SK-N-SH (cell line): ENCODE measurements at regions of chr4 and their contacts with region 1.

Region 1: DNA sequence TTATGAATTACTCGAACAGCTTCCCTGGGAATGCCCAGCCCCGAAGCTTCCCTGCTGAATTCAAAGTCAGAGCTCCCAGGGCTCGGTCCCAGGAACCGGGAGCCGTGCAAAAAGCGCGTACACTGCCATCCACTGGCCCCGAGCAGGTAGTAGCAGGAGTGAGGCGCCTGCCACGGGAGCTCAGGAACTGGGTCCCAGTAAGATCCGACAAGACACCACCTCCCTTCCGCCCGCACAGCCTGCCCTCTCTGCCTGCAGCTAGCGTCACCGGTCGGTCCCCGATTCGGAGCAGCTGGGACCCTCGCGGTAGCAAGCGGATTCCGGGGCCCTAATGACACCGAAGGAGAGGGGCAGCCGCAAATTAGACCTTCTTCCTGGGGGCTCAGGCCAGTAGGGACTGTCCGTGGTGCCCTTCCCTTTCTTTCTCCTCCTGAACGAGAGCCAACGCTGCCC is 1.2 kb downstream of the CORIN start:
- DNase-seq: peak; percentile 88
- H3K4me3 ChIP-seq: peak overlapping the region; percentile 60 to 67
- H3K27ac ChIP-seq: peak overlapping the region in 1 of 2 experiments; percentile 43; a peak in 1 of 4 replicates
- H3K4me1 ChIP-seq: peaks cover 0 to 9% of the 10 kb centered on the region in 2 experiments; a peak in 2 of 4 replicates
- H3K27me3 ChIP-seq: no peaks in the 10 kb centered on the region
- CTCF ChIP-seq: peak; percentile 74
- EP300 ChIP-seq: no peak
- RAD21 ChIP-seq: peak; percentile 93

Region 2: GRCh38 chr4:47668810-47669408 is 167.8 kb before region 1 on chr4:
- CTCF ChIA-PET with region 1: interaction called, 58 read pairs
- POLR2A ChIA-PET with region 1: no interaction called
- DNase-seq: peak; percentile 43
- H3K4me3 ChIP-seq: no peak overlapping the region
- H3K27ac ChIP-seq: no peak overlapping the region
- H3K4me1 ChIP-seq: peaks cover 0 to 2% of the 10 kb centered on the region in 2 experiments; a peak in 1 of 4 replicates
- H3K27me3 ChIP-seq: no peaks in the 10 kb centered on the region
- CTCF ChIP-seq: peak; percentile 88
- EP300 ChIP-seq: no peak
- RAD21 ChIP-seq: peak; percentile 81

Region 3: GRCh38 chr4:47692639-47693180 is 144.0 kb before region 1 on chr4:
- CTCF ChIA-PET with region 1: interaction called, 417 read pairs
- POLR2A ChIA-PET with region 1: no interaction called
- DNase-seq: no peak
- H3K4me3 ChIP-seq: no peak overlapping the region
- H3K27ac ChIP-seq: peak overlapping the region in 1 of 2 experiments; percentile 59; a peak in 1 of 4 replicates
- H3K4me1 ChIP-seq: 0 out of 4 replicates have a peak, but pooled peaks cover 0 to 6% of the 10 kb centered on the region in 2 experiments
- H3K27me3 ChIP-seq: no peaks in the 10 kb centered on the region
- CTCF ChIP-seq: no peak
- EP300 ChIP-seq: no peak
- RAD21 ChIP-seq: no peak

Region 4: GRCh38 chr4:47752214-47752613 is 84.5 kb before region 1 on chr4:
- CTCF ChIA-PET with region 1: interaction called, 11 read pairs
- POLR2A ChIA-PET with region 1: no interaction called
- DNase-seq: no peak
- H3K4me3 ChIP-seq: no peak overlapping the region
- H3K27ac ChIP-seq: no peak overlapping the region
- H3K4me1 ChIP-seq: 0 out of 4 replicates have a peak, but pooled peaks cover 0 to 3% of the 10 kb centered on the region in 2 experiments
- H3K27me3 ChIP-seq: no peaks in the 10 kb centered on the region
- CTCF ChIP-seq: no peak
- EP300 ChIP-seq: no peak
- RAD21 ChIP-seq: no peak

Region 5: DNA sequence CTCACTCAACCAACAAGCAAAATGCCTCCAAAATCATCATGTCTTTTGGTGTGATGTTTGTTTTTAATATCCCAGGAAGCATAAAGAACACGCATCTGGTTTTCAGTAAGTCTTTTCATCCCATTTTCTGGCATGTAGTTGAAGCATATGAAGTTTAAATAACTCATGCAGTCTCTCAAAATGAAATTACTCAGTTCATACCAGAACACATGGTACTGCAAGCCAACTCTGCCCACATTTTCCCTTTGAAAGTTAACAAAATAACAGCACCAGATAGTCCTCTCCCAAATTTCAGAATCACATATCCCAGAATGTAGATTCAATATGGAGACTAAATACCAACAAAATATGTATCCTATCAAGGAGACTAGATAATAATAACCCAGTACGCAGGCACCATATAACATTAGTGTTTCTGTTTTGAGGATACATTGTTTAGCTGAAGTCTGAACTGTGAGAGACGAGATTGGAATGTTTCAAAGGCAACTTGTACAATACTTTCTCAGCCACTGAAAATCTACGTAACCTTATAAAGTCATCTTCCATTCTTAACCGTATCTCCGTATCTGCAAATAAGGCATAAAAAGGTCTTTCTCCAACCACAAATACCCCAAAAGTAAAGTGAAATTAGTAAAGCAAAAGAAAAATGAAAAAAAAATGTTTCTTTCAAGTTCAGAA is 21.9 kb before region 1 on chr4:
- CTCF ChIA-PET with region 1: interaction called, 14 read pairs
- POLR2A ChIA-PET with region 1: no interaction called
- DNase-seq: no peak
- H3K4me3 ChIP-seq: no peak overlapping the region
- H3K27ac ChIP-seq: no peak overlapping the region
- H3K4me1 ChIP-seq: no peaks in the 10 kb centered on the region
- H3K27me3 ChIP-seq: no peaks in the 10 kb centered on the region; the same call in 1 of the 2 replicates
- CTCF ChIP-seq: no peak
- EP300 ChIP-seq: no peak
- RAD21 ChIP-seq: no peak

Region 6: DNA sequence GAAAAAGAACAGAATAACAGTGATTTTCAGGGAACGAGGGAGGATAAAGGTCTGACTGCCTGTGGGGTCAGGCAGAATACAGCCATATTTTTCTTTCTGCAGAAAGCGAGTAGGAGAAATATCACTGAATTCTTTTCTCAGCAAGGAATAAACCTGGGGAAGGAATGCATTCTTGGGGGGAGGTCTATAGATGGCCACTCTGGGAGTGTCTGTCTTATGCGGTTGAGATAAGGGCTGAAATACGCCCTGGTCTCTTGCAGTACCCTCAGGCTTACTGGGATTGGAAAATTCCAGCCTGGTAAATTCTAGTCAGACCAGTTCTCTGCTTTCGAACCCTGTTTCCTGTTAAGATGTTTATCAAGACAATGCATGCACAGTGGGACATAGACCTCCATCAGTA is 153.5 kb after region 1 on chr4:
- CTCF ChIA-PET with region 1: no interaction called
- POLR2A ChIA-PET with region 1: no interaction called
- DNase-seq: no peak
- H3K4me3 ChIP-seq: no peak overlapping the region
- H3K27ac ChIP-seq: no peak overlapping the region
- H3K4me1 ChIP-seq: no peaks in the 10 kb centered on the region
- H3K27me3 ChIP-seq: no peaks in the 10 kb centered on the region
- CTCF ChIP-seq: no peak
- EP300 ChIP-seq: no peak
- RAD21 ChIP-seq: no peak

Region 7: DNA sequence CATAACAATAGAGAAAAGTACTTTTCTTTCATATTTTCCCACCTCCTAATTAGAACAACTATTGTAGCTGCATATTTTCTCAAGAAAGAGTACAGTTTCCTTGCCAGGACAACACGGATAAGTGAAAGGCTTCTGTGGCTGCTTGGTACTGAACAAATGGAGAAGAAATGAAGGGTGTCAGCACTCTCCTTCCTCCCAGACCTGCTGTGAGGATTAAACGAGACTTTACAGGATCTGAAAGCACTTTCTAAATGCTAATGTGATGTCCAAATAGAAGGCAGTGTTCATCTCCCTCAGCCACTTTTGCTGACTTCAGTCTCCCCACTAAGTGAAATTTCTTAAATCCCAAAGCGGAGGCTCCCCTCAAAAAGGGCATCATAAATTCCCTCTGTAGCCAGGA is 193.8 kb after region 1 on chr4:
- CTCF ChIA-PET with region 1: no interaction called
- POLR2A ChIA-PET with region 1: no interaction called
- DNase-seq: no peak
- H3K4me3 ChIP-seq: no peak overlapping the region
- H3K27ac ChIP-seq: no peak overlapping the region
- H3K4me1 ChIP-seq: no peaks in the 10 kb centered on the region
- H3K27me3 ChIP-seq: no peaks in the 10 kb centered on the region
- CTCF ChIP-seq: no peak
- EP300 ChIP-seq: no peak
- RAD21 ChIP-seq: no peak